ENCODE measurements at regions of chr1 and their contacts with region 1.

Region 1: DNA sequence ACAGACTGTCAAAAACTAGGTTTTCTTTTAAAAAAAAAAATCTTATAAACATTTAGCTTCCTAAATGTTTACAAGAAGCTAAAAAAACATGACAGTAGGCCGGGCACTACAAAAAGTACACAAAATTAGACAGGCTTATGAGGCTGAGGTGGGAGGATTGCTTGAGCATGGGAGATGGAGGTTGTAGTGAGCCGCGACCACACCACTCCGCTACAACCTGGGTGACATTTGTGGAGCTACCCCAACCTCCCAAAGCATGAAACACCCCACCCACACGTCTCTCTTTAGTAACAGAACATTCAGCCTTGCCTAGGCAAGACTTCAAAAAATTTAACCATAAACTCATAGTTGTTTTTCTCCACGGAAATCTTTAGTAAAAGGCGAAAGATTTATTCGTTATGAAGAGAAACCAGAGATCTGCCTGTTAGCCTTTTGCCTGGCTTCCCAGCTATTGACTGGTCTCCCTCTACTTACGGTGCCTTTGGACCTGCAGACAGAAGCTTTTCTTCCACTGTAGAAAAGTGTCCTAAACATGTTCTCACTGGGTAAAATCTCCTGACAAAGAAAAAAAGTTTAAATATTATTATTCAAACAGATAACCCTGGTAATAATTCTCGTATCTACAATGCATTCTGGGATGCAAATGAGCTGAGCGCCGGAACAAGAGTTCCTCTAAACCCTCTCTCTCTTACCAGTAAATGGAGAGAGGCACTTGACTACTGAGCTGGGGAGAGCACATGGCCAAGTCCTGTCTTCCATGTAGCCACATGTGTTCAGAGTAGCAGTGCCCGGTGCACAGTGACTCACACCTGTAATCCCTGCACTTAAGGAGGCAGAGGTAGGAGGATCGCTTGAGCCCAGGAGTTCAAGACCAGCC is 9.2 kb downstream of the RNU5D-1 start:
- DNase-seq: no peak
- H3K4me3 ChIP-seq: no peak overlapping the region
- H3K27ac ChIP-seq: peak overlapping the region; percentile 62
- H3K4me1 ChIP-seq: peaks cover 0 to 1% (median 0%) of the 10 kb centered on the region in 4 experiments; a peak in 3 of 7 replicates
- H3K27me3 ChIP-seq: no peaks in the 10 kb centered on the region
- CTCF ChIP-seq: no peak
- EP300 ChIP-seq: no peak
- POLR2A ChIP-seq: peak; percentile 100
- RAD21 ChIP-seq: no peak

Region 2: DNA sequence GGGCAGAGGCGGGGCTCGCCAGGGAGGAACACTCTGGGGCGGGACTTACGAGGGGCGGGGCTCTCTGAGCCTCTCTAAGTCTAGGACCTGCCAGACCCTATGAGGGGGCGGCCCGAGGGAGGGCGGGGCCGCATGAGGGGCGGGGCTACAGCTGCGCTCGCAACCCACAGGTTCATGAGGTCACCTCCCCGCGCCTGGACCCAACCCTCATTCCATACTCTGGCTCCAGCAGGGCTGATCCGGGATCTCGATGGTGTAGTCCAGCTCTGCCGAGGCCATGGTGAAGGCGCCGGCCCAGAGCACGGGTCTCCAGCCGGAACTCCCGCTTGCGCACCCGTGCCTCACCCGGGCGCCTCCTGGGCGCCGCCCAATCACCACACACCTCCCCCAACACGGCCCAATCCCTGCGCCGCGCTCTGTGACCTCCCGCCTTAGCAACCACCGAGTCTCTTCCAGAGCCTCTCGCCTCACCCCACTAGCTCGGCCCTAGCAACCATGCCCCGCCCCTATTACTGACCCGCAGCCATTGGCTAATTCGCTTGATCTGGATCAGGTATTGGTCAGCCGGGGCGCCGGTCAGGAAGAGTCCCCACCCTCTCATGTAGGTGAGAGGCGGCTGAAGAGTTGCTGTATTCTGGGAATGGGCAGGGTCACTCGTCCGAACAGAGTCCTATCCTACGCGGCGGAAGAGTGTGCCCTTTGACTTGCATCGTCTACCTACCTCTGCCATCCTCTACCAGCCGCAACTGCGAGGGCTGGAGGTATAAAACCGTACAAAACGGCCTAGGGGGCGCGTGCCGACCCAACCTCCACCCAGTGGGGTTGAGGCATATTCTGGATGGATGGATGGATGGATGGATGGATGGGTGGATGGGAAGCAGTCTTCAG is 47.4 kb before region 1 on chr1 and contains the starts of genes ARMH1 and TMEM53:
- CTCF ChIA-PET with region 1: interaction called, 4 read pairs
- POLR2A ChIA-PET with region 1: interaction called, 18 read pairs
- DNase-seq: peak; percentile 97 to 98
- H3K4me3 ChIP-seq: peak within 1 kb of the TSS; percentile 58 to 93 (median 75)
- H3K27ac ChIP-seq: peak within 1 kb of the TSS; percentile 80
- H3K4me1 ChIP-seq: peaks cover 4 to 11% (median 6%) of the 10 kb centered on the region in 4 experiments; a peak in 6 of 7 replicates
- H3K27me3 ChIP-seq: no peaks in the 10 kb centered on the region; a peak in 1 of 7 replicates
- CTCF ChIP-seq: no peak
- EP300 ChIP-seq: no peak
- POLR2A ChIP-seq: peak; percentile 82 to 89
- RAD21 ChIP-seq: no peak
- total RNA-seq, gene ARMH1: 0.63 and 0.82 TPM in 2 replicates
- total RNA-seq, gene TMEM53: 6.7 and 9.5 TPM in 2 replicates

Region 3: DNA sequence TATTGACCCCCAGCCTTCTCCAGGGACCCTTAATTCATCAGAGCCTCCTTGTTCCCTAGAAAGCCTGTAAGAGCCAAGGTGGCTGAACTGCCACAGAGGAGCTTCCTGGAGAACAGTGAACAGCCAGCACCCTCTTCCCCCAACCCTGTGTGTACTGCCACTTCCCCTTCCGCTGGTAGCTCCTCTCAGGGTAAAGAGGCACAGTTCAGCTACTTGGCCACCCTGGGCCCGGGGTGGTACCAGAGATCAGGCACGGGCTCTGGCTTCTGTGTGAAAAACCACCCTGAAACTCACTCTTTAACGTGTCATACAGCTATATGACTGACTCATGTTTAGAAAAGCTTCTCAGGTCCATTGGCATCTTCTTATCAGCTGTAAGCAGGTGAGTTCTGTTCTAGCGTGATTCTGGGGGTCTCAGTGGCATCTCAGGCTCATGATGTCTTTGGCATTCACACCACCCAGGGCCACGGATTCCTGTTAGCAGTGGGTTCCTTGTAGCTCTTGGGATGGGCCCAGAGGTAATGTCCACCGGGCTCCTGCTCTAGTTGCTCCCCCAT is 24.9 kb before region 1 on chr1:
- CTCF ChIA-PET with region 1: interaction called, 7 read pairs
- POLR2A ChIA-PET with region 1: interaction called, 32 read pairs
- DNase-seq: no peak
- H3K4me3 ChIP-seq: no peak overlapping the region
- H3K27ac ChIP-seq: no peak overlapping the region
- H3K4me1 ChIP-seq: no peaks in the 10 kb centered on the region
- H3K27me3 ChIP-seq: no peaks in the 10 kb centered on the region
- CTCF ChIP-seq: no peak
- EP300 ChIP-seq: no peak
- POLR2A ChIP-seq: no peak
- RAD21 ChIP-seq: no peak

Region 4: GRCh38 chr1:44739361-44740178 is 17.8 kb after region 1 on chr1 and contains the start of gene KIF2C:
- CTCF ChIA-PET with region 1: interaction called, 107 read pairs
- POLR2A ChIA-PET with region 1: interaction called, 213 read pairs
- DNase-seq: peak; percentile 91 to 97
- H3K4me3 ChIP-seq: peak within 1 kb of the TSS; percentile 54 to 98 (median 94)
- H3K27ac ChIP-seq: peak within 1 kb of the TSS; percentile 83
- H3K4me1 ChIP-seq: peaks cover 0 to 3% (median 2%) of the 10 kb centered on the region in 4 experiments; a peak in 3 of 7 replicates
- H3K27me3 ChIP-seq: no peaks in the 10 kb centered on the region
- CTCF ChIP-seq: no peak
- EP300 ChIP-seq: no peak
- POLR2A ChIP-seq: peak; percentile 40 to 93
- RAD21 ChIP-seq: no peak
- total RNA-seq, gene KIF2C: 66.4 and 68.1 TPM in 2 replicates

Region 5: DNA sequence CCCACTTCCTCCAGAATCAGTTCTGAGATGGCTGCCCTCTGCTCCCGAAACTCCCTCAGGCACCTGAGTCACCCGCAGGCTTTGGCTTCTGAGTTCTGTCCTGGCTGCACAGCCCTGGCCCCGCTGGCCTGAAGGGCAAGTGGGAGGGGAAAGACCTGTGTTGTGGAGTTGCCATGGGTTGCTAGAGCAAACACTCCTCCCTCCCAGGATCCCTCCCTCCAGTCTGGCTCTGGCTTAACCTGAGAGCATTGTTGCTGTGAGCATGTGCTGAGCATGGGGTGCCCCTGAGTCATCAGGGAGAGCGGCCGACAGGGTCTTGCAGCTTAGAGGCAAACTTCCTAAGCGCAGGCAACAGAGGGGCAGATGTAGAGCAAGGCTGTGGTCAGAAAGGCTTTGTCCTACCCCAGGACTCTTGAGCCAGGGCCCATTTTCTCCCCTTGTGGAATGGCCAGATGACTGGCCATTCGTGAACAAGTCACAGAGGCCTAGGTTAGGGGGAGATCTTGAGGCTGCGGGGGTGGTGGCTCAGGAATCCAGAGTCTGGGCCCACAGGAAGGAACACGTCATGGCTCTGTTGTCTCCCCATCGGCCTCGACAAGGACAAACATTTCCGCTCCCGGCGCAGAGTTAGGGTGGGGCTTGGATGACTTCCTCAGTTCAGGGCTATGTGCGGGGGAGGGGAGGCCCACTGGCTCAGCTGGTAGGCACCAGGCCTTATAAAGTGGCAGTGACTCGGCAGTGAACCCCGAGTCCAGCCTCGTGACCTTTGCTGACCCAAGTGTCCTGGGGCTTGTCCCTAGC is 85.7 kb after region 1 on chr1 and contains the start of gene DYNLT4:
- CTCF ChIA-PET with region 1: interaction called, 4 read pairs
- POLR2A ChIA-PET with region 1: interaction called, 22 read pairs
- DNase-seq: peak in 1 of 2 experiments; percentile 89
- H3K4me3 ChIP-seq: peak within 1 kb of the TSS in 2 of 4 experiments; percentile 5 to 37; a peak in 3 of 8 replicates
- H3K27ac ChIP-seq: peak within 1 kb of the TSS; percentile 96
- H3K4me1 ChIP-seq: peaks cover 10 to 37% (median 28%) of the 10 kb centered on the region in 4 experiments
- H3K27me3 ChIP-seq: peaks cover 0 to 4% (median 1%) of the 10 kb centered on the region in 4 experiments; a peak in 3 of 7 replicates
- CTCF ChIP-seq: no peak
- EP300 ChIP-seq: peak; percentile 36 to 89; a peak in 2 of 3 replicates
- POLR2A ChIP-seq: peak in 1 of 2 experiments; percentile 80; a peak in 2 of 3 replicates
- RAD21 ChIP-seq: no peak
- total RNA-seq, gene DYNLT4: not detected in 2 replicates

Region 6: DNA sequence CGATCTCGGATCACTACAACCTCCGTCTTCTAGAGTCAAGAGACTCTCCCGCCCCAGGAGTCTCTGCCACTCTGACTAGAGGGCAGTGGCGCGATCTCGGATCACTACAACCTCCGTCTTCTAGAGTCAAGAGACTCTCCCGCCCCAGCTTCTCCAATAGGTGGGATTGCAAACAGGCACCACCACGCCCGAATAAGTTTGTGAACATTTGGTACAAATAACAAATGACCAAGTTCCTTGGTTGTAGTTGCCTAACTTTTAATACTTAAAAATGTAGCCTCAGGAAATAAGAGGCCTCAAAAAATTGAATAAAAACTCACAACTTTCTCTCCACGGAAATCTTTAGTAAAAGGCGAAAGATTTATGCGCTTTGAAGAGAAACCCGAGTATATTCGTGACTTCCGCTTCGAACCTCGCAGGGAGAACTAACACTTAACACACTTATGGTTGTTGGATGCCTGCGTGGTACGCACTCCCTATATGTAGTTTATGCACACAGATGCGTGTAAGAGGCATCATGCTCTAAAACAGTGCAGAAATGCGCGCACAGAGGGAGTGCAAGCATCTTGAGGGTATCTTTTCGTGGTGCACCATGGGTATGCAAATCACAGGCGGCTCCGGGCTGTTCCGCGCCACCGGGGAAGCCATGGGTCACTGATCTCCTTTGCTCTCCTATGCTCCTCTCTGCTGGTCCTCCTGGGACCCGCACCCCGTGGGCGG is 98.0 kb after region 1 on chr1:
- CTCF ChIA-PET with region 1: interaction called, 4 read pairs
- POLR2A ChIA-PET with region 1: interaction called, 122 read pairs
- DNase-seq: peak; percentile 79 to 91
- H3K4me3 ChIP-seq: peak overlapping the region; percentile 40 to 64 (median 47)
- H3K27ac ChIP-seq: peak overlapping the region; percentile 100
- H3K4me1 ChIP-seq: peaks cover 2 to 5% (median 3%) of the 10 kb centered on the region in 4 experiments; a peak in 5 of 7 replicates
- H3K27me3 ChIP-seq: no peaks in the 10 kb centered on the region; a peak in 2 of 7 replicates
- CTCF ChIP-seq: 0 out of 4 replicates have a peak, but pooled peaks of 1 of the 3 experiments have one; percentile 5
- EP300 ChIP-seq: peak in 1 of 2 experiments; percentile 79; a peak in 1 of 3 replicates
- POLR2A ChIP-seq: peak; percentile 99 to 100
- RAD21 ChIP-seq: peak in 1 of 2 experiments; percentile 15; a peak in 3 of 4 replicates